Pancreas (tissue), 10 donors: ENCODE measurements at regions of chr20 and their contacts with region 1.

Region 1: DNA sequence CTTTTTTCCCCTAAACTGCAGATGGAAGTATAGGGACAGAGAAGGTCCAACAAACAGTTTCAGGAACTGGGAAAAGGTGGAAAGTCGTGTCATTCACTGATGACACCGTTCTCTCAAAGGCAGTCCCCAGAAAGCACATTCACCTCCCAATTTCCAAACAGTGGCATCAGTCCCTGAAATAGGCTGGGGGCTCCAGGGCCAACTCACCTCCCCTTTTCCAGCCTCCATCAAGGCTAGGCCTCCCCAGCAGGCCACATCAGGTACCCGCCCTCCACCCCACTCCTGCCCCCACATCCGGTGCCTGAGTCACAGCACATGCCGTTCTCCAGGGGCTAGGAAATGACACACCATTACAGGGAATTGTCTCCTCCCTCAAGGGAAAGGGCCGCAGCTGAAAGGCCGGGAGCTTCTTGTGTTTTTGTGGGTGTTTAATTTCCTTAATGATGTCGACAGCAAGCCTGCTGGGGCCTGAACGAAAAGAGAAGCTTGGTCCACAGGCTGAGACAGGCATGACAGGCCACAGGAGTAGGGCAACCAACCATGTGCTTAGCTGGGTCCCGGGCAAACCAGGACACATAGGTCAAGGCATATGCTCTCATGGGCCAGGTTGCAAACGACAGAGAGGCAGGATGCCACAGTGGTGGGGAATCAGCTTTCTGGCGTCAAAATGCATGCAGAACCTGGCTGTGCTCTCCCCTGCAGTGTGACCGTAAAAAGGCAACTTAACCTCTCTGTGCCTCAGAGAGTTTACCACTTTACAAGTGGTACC is 39.2 kb downstream of the ZMYND8 start:
- DNase-seq: peak in 4 of 6 donors; percentile 26 to 40 (median 34)
- ATAC-seq: peak in 3 of 4 donors; percentile 7 to 51 (median 26)
- H3K4me3 ChIP-seq: no peak overlapping the region
- H3K27ac ChIP-seq: peak overlapping the region; percentile 82 to 93 (median 92)
- H3K4me1 ChIP-seq: peaks cover 26 to 54% (median 42%) of the 10 kb centered on the region in 3 donors
- H3K27me3 ChIP-seq: no peaks in the 10 kb centered on the region
- CTCF ChIP-seq: no peak

Region 2: GRCh38 chr20:47356526-47357295 is 39.4 kb after region 1 on chr20 and contains the start of gene ZMYND8:
- intact Hi-C with region 1: loop called in 1 of 3 experiments (anchors 5 kb)
- DNase-seq: peak; percentile 83 to 96 (median 84)
- ATAC-seq: peak; percentile 46 to 63 (median 56)
- H3K4me3 ChIP-seq: peak within 1 kb of the TSS in 2 of 4 donors; percentile 7 to 19
- H3K27ac ChIP-seq: peak within 1 kb of the TSS; percentile 94 to 99 (median 98)
- H3K4me1 ChIP-seq: peaks cover 89 to 96% (median 93%) of the 10 kb centered on the region in 3 donors
- H3K27me3 ChIP-seq: no peaks in the 10 kb centered on the region
- CTCF ChIP-seq: no peak
- total RNA-seq, gene ZMYND8: 11.3 to 25.6 (median 18.5) TPM